ENCODE measurements at regions of chr19 and their contacts with region 1.

Region 1: GRCh38 chr19:46746281-46747013 is at the start of gene STRN4:
- DNase-seq: peak; percentile 82
- ATAC-seq: peak; percentile 78
- H3K4me3 ChIP-seq: peak within 1 kb of the TSS; percentile 51 to 87 (median 84)
- H3K4me3 Mint-ChIP-seq: peak within 1 kb of the TSS; percentile 93
- H3K27ac ChIP-seq: peak within 1 kb of the TSS; percentile 43 to 77
- H3K27ac Mint-ChIP-seq: peak within 1 kb of the TSS; percentile 85
- H3K4me1 ChIP-seq: peaks cover 15 to 43% of the 10 kb centered on the region in 2 donors
- H3K4me1 Mint-ChIP-seq: peaks cover 58% of the 10 kb centered on the region
- H3K27me3 ChIP-seq: no peaks in the 10 kb centered on the region
- H3K27me3 Mint-ChIP-seq: no peaks in the 10 kb centered on the region
- CTCF ChIP-seq: no peak
- total RNA-seq, gene STRN4: 102 and 112 TPM in 2 replicates

Region 2: DNA sequence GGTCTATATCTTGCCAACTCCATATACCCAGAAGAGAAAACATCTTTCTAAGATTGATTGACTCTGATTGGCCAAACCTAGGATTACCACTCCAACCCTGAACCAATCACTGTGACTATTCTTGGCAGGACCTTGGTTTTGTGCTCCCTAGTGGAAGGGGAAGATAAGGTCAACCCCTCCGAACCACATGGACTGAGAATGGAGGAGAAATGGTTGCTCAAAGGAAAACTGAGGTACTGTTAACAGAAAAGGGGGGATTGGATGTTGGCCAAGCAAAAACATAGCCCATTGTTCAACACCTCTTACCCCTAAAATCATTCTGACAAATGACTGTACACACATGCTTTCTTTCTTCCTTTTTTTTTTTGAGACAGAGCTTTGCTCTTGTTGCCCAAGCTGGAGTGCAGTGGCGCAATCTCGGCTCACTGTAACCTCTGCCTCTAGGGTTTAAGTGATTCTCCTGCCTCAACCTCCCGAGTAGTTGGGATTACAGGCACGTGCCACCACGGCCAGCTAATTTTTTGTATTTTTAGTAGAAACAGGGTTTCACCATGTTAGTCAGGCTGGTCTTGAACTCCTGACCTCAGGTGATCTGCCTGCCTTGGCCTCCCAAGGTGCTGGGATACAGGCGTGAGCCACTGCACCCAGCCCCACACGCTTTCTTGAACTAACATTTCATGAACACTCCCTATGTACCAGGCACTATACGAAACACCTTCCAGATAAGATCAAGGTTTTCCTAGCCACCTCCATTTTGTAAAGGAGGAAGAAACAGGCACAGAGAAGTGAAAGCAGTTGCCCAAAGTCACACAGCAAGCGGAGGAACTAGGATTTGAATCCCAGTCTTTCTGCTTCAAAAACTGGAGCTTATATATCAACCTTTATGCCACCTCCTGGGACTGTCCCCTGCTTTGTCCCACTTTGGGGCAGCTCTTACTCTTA is 1006.7 kb before region 1 on chr19:
- CTCF ChIA-PET with region 1: no interaction called
- POLR2A ChIA-PET with region 1: no interaction called
- intact Hi-C with region 1: no loop called
- DNase-seq: no peak
- ATAC-seq: no peak
- H3K4me3 ChIP-seq: no peak overlapping the region
- H3K4me3 Mint-ChIP-seq: no peak overlapping the region
- H3K27ac ChIP-seq: no peak overlapping the region
- H3K27ac Mint-ChIP-seq: no peak overlapping the region
- H3K4me1 ChIP-seq: no peaks in the 10 kb centered on the region
- H3K4me1 Mint-ChIP-seq: no peaks in the 10 kb centered on the region
- H3K27me3 ChIP-seq: no peaks in the 10 kb centered on the region
- H3K27me3 Mint-ChIP-seq: peaks cover 11% of the 10 kb centered on the region
- CTCF ChIP-seq: no peak

Region 3: DNA sequence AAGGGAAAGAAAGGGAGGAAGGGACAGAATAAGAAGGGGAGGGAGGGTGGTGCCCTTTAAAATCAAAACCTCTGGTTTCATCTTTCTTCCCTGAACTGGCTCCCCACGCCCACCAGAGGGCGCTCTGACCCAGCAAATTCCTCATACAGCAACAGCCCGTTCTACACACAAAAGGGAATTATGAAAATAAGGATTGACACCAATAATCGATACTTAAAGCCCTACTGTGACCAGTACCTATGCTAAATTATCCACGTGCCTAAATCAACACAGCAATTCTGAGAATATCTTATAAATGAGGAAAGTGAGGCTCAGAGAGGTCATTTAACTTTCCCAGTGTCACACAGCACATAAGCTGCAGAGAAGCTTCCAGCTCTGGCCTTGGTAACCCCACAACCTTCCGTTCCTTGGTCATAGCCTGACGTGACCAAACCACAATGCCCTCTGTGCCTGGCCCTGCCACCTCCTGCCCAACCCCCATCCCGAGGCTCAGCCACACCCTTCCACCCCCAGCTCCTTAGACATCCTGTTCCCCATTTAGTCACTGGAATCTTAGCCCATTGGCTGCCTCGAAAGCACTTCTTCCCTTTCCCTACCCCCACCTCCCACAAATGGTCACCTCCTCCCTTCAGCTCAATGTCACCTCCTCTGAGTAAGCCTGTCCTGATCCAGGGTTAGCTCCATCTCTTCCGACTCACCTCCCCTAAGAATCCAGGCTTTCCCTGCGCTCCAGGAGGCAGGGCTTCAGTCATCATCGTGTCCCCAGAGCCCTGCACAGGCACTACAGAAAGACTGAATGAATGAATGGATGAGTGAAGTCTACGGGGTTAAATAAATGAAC is 216.6 kb before region 1 on chr19:
- CTCF ChIA-PET with region 1: interaction called, 11 read pairs
- POLR2A ChIA-PET with region 1: no interaction called
- intact Hi-C with region 1: loop called (anchors 1 kb)
- DNase-seq: peak; percentile 81
- ATAC-seq: peak; percentile 67
- H3K4me3 ChIP-seq: no peak overlapping the region
- H3K4me3 Mint-ChIP-seq: no peak overlapping the region
- H3K27ac ChIP-seq: no peak overlapping the region
- H3K27ac Mint-ChIP-seq: no peak overlapping the region
- H3K4me1 ChIP-seq: peaks cover 0 to 10% of the 10 kb centered on the region in 2 donors
- H3K4me1 Mint-ChIP-seq: peaks cover 10% of the 10 kb centered on the region
- H3K27me3 ChIP-seq: peaks cover 0 to 15% (median 3%) of the 10 kb centered on the region in 4 experiments
- H3K27me3 Mint-ChIP-seq: peaks cover 8% of the 10 kb centered on the region
- CTCF ChIP-seq: peak; percentile 98

Region 4: DNA sequence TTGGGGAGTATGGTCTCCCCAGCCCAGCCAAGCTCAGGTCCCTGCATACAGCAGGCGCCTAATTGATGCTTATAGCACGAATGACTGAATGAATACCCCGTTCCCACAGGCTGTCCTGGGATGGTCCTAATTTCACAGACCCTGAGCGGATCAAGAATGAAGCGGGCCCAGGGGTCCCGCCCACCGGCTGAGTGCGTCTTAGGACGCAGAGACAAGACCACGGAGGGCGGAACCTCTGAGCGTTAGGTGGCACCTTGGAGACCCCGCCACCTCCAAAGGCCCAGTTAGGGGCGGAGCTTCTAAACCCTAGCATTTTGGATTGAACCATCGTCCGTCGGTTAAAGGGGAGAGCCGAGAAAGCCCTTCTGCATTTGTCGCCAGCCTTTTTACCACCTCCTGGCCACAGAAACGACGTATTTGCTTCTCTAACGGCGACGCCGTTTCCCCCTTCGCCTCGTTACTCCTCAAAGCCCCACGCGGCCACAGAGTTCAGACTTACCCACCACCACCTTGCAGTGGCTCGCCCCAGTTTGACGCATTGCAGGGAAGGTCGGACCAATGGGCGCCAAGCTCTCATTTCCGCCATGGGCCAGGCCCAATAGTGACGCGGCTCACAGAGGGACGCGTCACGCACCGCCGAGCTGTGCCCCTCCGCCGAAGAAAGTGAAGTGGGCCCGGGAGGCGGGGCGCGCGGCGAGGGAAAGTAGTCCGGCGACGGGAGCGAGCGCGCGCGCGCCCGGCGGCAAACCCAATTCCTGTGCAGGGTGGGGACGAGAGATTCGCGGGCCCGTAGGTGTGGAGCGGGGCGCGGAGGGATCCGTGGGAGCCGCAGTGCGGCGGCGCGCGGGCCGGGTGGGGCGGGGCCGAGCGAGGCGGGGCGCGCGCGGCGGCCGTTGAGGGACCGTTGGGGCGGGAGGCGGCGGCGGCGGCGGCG is 145.8 kb before region 1 on chr19:
- CTCF ChIA-PET with region 1: interaction called, 7 read pairs
- POLR2A ChIA-PET with region 1: no interaction called
- intact Hi-C with region 1: loop called (anchors 2 kb)
- DNase-seq: peak; percentile 100
- ATAC-seq: peak; percentile 89
- H3K4me3 ChIP-seq: peak overlapping the region; percentile 64 to 100 (median 99)
- H3K4me3 Mint-ChIP-seq: peak overlapping the region; percentile 100
- H3K27ac ChIP-seq: peak overlapping the region; percentile 98 to 100
- H3K27ac Mint-ChIP-seq: peak overlapping the region; percentile 100
- H3K4me1 ChIP-seq: peaks cover 19 to 30% of the 10 kb centered on the region in 2 donors
- H3K4me1 Mint-ChIP-seq: peaks cover 31% of the 10 kb centered on the region
- H3K27me3 ChIP-seq: no peaks in the 10 kb centered on the region
- H3K27me3 Mint-ChIP-seq: no peaks in the 10 kb centered on the region
- CTCF ChIP-seq: no peak

Region 5: GRCh38 chr19:46704379-46705076 is 41.9 kb before region 1 on chr19:
- CTCF ChIA-PET with region 1: interaction called, 13 read pairs
- POLR2A ChIA-PET with region 1: interaction called, 7 read pairs
- intact Hi-C with region 1: loop called (anchors 1 kb)
- DNase-seq: peak; percentile 85
- ATAC-seq: peak; percentile 93
- H3K4me3 ChIP-seq: no peak overlapping the region
- H3K4me3 Mint-ChIP-seq: no peak overlapping the region
- H3K27ac ChIP-seq: peak overlapping the region in 1 of 2 donors; percentile 48
- H3K27ac Mint-ChIP-seq: peak overlapping the region; percentile 87
- H3K4me1 ChIP-seq: peaks cover 3 to 8% of the 10 kb centered on the region in 2 donors
- H3K4me1 Mint-ChIP-seq: peaks cover 13% of the 10 kb centered on the region
- H3K27me3 ChIP-seq: no peaks in the 10 kb centered on the region
- H3K27me3 Mint-ChIP-seq: no peaks in the 10 kb centered on the region
- CTCF ChIP-seq: peak; percentile 93

Region 6: GRCh38 chr19:47057328-47057727 is 310.9 kb after region 1 on chr19:
- CTCF ChIA-PET with region 1: no interaction called
- POLR2A ChIA-PET with region 1: no interaction called
- intact Hi-C with region 1: no loop called
- DNase-seq: no peak
- ATAC-seq: no peak
- H3K4me3 ChIP-seq: no peak overlapping the region
- H3K4me3 Mint-ChIP-seq: no peak overlapping the region
- H3K27ac ChIP-seq: no peak overlapping the region
- H3K27ac Mint-ChIP-seq: no peak overlapping the region
- H3K4me1 ChIP-seq: no peaks in the 10 kb centered on the region
- H3K4me1 Mint-ChIP-seq: no peaks in the 10 kb centered on the region
- H3K27me3 ChIP-seq: no peaks in the 10 kb centered on the region
- H3K27me3 Mint-ChIP-seq: peaks cover 4% of the 10 kb centered on the region
- CTCF ChIP-seq: no peak

Measured in B cell (primary cell).